Breast epithelium (tissue), 4 donors: ENCODE measurements at regions of chr3 and their contacts with region 1.

Region 1: DNA sequence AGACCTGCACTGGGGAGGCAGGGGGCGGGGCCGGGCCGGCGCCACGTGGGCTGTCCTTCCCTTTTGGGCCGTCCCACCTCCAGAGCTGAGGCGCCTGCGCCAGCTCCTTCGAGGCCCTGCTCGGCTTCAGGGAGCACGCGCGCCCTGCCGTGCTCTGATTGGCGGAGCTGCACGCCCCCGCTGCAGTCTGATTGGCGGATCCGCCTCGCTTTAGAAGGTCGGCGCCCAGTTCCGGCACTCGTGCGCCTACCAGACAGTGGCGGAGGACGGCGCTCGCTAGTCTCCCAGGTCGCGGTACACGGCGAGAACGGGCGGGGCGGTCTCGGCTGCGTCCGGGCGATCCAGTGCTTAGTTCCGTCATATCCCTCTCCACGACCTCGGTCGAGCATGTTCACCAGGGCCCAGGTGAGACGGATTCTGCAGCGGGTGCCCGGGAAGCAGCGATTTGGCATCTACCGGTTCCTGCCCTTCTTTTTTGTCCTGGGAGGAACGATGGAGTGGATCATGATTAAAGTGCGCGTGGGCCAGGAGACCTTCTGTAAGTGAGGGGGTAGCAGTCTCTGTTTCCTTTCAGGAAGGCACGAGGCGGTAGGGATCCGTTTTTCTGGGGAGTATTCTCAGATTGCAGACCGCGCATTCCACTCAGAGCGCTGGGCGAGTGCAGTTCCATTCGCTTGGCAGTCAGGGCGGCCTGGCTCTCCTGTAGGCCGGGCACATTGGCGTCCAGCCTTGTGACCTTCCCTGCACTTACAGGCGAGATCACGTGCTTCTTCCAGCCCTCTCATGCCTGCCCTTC is at the start of gene UQCC5:
- DNase-seq: peak; percentile 98
- H3K4me3 ChIP-seq: peak within 1 kb of the TSS; percentile 66 to 76 (median 69)
- H3K27ac ChIP-seq: peak within 1 kb of the TSS; percentile 87 to 89
- H3K4me1 ChIP-seq: peaks cover 16 to 19% of the 10 kb centered on the region in 2 donors
- H3K27me3 ChIP-seq: no peaks in the 10 kb centered on the region
- CTCF ChIP-seq: no peak
- POLR2A ChIP-seq: peak; percentile 93
- total RNA-seq, gene UQCC5: 1.3 to 14.1 (median 1.8) TPM

Region 2: DNA sequence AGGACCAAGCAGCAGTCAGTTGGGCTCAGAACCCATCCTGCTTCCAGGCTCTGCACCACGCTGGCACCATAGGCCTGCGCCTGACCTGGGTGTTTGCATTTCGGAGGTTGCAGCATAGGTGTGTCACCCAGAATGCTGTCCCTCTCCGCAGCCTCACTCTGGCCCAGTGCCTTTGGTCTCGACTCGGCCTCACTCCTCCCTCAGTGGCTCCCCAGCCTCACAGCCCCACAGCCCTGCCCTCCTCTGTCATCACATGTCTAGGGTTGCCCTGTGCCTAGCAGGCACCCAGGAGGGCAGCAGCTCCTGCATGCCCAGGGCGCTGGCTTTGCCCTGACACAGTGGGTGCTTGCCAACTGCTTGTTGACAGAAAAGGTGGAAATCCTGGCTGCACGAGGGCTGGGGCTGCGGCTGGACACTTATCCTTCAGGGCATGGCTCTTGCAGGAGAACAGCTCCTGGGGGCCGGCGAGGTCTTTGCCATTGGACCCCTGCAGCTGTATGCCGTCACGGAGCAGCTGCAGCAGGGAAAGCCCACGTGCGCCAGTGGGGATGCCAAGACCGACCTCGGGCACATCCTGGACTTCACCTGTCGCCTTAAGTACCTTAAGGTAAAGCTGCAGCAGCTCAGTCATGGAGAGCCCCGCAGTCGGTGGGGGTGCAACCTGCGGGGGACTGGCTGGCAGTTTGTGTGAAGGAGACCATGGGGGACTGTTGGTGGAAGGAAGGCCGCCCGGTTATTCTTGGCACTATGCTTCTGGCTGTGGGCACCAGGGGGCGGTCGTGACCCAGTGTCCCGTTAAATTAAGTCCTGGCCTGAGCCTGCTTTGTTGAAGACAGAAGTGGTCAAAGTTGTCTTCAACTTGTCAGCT is 65.0 kb before region 1 on chr3:
- intact Hi-C with region 1: loop called (anchors 10 kb)
- DNase-seq: peak; percentile 49 to 80
- H3K4me3 ChIP-seq: peak overlapping the region in 1 of 3 donors; percentile 33
- H3K27ac ChIP-seq: peak overlapping the region; percentile 29 to 78
- H3K4me1 ChIP-seq: peaks cover 0 to 8% of the 10 kb centered on the region in 2 donors
- H3K27me3 ChIP-seq: no peaks in the 10 kb centered on the region
- CTCF ChIP-seq: peak; percentile 35 to 73 (median 69)
- POLR2A ChIP-seq: no peak

Region 3: DNA sequence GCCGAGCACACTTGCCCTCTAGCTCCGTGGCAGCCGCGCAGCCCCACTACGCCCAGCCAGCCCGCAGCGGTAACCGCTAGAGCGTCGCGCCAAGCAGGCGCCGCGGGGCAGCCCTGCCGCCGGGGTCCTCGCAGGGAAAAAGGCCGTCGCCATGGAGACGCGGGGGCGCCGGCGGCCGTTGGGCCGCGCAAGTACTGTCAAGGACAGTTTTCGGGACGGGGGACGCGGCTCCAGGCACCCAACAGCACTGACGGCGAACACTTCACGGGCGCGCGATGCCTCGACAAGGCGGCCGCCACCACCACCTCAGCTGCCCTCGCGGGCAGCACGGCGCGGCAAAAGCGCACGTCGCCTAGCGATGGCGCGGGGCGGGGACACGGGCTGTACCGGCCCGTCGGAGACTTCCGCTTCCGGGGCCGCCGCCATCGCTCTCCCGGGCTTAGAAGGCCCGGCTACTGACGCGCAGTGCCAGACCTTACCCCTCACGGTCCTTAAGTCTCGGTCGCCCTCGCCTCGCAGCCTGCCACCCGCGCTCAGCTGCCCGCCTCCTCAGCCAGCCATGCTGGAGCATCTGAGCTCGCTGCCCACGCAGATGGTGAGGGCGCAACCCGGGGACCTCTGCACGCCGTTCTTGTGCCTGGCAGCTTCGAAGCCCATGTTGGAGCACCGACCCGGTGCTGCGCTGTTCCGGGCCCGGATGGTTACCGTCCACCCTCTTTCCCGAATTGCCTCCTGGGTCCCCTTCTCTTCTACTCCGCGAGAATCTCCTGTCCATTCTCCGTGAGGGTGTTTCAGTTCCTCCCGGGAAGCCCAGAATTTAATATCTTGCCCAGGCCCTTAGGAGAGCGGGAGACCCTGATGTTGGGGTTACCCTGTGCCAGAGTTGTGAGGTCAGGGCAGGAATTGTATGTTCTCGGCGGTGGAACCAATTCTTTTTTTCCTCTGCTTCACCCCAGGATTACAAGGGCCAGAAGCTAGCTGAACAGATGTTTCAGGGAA is 169.4 kb after region 1 on chr3 and contains the starts of genes GLT8D1 and SPCS1:
- intact Hi-C with region 1: loop called (anchors 10 kb)
- DNase-seq: peak; percentile 72 to 78
- H3K4me3 ChIP-seq: peak within 1 kb of the TSS; percentile 79 to 99 (median 93)
- H3K27ac ChIP-seq: peak within 1 kb of the TSS; percentile 85 to 97
- H3K4me1 ChIP-seq: peaks cover 0 to 24% of the 10 kb centered on the region in 2 donors
- H3K27me3 ChIP-seq: no peaks in the 10 kb centered on the region
- CTCF ChIP-seq: no peak
- POLR2A ChIP-seq: peak; percentile 50
- total RNA-seq, gene GLT8D1: 44.5 to 65.7 (median 56.4) TPM
- total RNA-seq, gene SPCS1: 77.1 to 90.2 (median 86.5) TPM